ENCODE measurements at regions of chr17 and their contacts with region 1.

Region 1: DNA sequence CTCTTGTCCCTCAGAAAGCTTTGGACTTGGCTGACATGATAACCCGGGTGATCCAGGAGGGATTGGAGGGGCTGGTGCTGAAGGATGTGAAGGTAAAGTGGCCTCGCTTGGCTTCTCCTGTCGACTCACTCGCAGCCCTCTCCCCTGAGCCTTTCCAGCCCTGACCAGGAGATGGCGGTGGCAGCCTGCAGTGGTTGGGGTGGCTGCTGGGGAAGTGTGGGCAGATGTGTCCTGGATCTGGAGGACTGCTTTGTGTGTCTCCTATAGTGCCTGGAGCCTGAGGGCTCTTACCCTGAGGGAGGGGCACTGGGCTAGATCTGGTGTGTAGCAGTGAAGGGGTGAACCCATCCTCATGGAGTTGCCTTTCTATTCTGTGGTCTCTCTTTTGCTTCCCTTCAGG is 17.9 kb downstream of the LIG3 start:
- DNase-seq: peak; percentile 78 to 95
- ATAC-seq: peak; percentile 90
- H3K4me3 ChIP-seq: no peak overlapping the region
- H3K27ac ChIP-seq: peak overlapping the region; percentile 25 to 55; a peak in 4 of 6 replicates
- H3K4me1 ChIP-seq: peaks cover 3% of the 10 kb centered on the region; the same call in 1 of the 3 replicates
- CTCF ChIP-seq: peak; percentile 92
- EP300 ChIP-seq: no peak
- POLR2A ChIP-seq: no peak
- RAD21 ChIP-seq: peak; percentile 97 to 99

Region 2: GRCh38 chr17:34584805-34585416 is 413.3 kb before region 1 on chr17:
- CTCF ChIA-PET with region 1: no interaction called
- POLR2A ChIA-PET with region 1: no interaction called
- DNase-seq: peak; percentile 28 to 49
- ATAC-seq: peak; percentile 25 to 55; a peak in 3 of 6 replicates
- H3K4me3 ChIP-seq: no peak overlapping the region
- H3K27ac ChIP-seq: no peak overlapping the region
- H3K4me1 ChIP-seq: peaks cover 14% of the 10 kb centered on the region
- CTCF ChIP-seq: peak; percentile 27; the same call in 1 of the 3 replicates
- EP300 ChIP-seq: no peak
- POLR2A ChIP-seq: no peak
- RAD21 ChIP-seq: peak; percentile 16 to 49; a peak in 3 of 5 replicates

Region 3: DNA sequence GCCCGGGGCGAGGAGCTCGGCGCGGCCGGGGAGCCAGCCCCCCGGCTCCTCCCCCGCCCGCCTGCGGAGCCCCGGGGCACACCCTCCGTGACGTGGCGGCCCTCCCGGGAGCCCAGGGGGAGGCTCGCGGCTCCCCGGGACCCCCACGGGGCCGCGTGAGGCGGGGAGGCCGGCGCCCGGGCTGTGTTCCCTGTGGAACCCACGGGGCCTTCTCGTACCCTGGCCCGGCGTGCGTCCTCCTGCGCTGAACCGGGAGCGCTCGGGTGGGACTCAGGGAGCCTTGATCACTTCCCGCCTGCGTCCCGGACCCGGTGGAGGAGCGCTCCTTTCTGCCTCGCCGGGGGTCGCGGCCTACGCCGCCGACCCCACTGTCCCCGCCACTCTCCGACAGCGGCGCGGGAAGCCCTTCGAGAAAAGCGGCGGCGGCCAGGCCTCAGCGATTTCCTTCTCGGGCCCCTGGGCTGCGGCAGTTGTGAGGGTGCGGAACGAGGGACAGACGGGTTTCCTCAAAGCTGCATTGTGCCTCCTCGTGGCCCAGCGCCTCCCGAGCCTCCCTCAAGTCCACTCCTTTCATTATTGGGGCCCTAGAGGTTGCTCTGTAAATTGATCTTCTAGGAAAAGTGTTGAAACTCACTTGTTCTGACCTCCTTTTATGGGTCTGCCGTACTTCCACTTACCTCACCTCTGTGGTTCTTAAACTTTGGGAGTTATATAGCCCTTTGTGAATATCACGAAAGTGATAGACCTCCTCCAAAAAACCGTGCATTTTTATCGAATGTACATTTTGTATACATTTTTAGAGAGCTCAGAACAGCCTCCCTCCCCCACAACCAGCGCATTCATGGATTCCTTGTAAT is 17.3 kb before region 1 on chr17:
- CTCF ChIA-PET with region 1: interaction called, 51 read pairs
- POLR2A ChIA-PET with region 1: interaction called, 4 read pairs
- DNase-seq: peak; percentile 86 to 93
- ATAC-seq: peak; percentile 91 to 94
- H3K4me3 ChIP-seq: peak overlapping the region; percentile 78
- H3K27ac ChIP-seq: peak overlapping the region; percentile 94 to 97
- H3K4me1 ChIP-seq: peaks cover 14% of the 10 kb centered on the region
- CTCF ChIP-seq: peak; percentile 55
- EP300 ChIP-seq: peak in 1 of 2 experiments; percentile 18; a peak in 1 of 5 replicates
- POLR2A ChIP-seq: peak; percentile 37
- RAD21 ChIP-seq: peak; percentile 52 to 56; a peak in 4 of 5 replicates

Region 4: DNA sequence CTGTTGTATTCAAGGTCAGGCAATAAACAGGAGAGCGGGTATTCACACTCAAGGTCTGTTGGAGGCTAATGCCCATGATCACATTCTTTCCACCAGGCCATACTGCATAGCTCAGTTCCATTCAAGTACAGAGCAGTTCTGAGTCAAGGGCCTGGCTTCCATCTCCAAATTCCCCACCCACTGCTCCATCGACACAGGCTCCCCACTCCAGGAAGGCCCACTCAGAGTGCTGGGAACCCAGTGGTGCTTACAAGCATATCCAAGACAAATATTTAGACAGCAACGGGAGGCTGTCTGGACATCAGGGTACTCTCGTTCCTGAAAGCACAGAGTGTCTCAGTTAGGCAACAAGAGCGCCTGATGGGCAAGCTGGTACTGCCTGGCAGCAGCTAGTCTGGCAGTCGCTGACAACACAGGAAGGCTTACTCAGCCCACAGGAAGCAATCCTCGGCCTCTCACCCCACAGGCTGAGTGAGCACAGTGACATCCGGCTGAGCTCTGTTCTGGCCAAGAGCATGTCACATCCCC is 24.4 kb after region 1 on chr17:
- CTCF ChIA-PET with region 1: interaction called, 53 read pairs
- POLR2A ChIA-PET with region 1: no interaction called
- DNase-seq: peak; percentile 74 to 82
- ATAC-seq: peak; percentile 92 to 94
- H3K4me3 ChIP-seq: no peak overlapping the region
- H3K27ac ChIP-seq: peak overlapping the region; percentile 77 to 80; a peak in 5 of 6 replicates
- H3K4me1 ChIP-seq: peaks cover 31% of the 10 kb centered on the region
- CTCF ChIP-seq: no peak
- EP300 ChIP-seq: no peak
- POLR2A ChIP-seq: no peak
- RAD21 ChIP-seq: no peak

Region 5: DNA sequence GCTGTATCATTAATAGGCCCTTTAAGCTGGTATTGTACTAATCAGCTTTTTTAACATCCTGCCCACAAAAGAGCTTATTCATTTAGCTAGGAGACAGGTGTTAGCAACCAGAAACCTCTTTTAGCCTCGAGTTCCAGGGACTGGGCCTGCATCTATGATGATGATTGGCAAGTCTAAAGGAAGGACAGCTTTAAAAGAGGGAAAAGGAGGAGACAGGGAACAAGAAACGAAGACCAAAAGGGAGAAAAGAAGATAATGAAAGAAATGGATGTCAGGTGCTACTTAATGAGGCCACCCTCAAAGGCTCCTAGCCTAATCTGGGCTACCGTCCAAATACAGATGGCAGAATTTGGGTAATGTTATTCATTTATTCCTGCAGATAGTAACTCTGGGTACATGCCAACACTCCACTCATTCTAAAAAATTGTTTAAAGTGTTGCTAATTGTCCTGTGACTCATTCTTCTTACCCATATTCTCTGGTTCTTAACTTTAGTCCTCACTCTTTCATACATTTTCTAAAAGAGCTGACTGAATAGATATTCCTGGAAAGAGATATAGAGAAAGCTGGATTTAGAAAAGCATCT is 84.0 kb after region 1 on chr17:
- CTCF ChIA-PET with region 1: interaction called, 12 read pairs
- POLR2A ChIA-PET with region 1: no interaction called
- DNase-seq: no peak
- ATAC-seq: no peak
- H3K4me3 ChIP-seq: no peak overlapping the region; the same call in 2 of the 3 replicates
- H3K27ac ChIP-seq: peak overlapping the region; percentile 88 to 96
- H3K4me1 ChIP-seq: peaks cover 100% of the 10 kb centered on the region
- CTCF ChIP-seq: no peak
- EP300 ChIP-seq: no peak
- POLR2A ChIP-seq: no peak
- RAD21 ChIP-seq: no peak

Region 6: DNA sequence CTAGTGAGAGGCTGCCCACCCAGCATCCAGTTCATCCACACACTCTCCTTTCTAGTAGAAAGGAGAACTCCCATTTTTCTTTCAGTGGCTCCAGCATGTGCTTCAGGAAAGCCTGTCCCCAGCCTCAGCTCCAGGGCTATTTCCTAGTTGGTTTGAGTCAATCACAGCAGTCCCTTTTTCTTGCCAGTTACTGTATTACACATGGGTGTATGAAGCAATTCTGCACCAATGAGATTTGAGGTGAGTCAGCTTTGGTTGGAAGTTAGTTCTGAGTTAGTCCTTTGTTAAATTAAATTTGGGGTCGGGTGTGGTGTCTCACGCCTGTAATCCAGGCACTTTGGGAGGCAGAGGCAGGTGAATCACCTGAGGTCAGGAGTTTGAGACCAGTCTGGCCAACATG is 96.7 kb after region 1 on chr17:
- CTCF ChIA-PET with region 1: interaction called, 46 read pairs
- POLR2A ChIA-PET with region 1: no interaction called
- DNase-seq: peak in 1 of 2 experiments; percentile 72
- ATAC-seq: peak; percentile 79 to 83
- H3K4me3 ChIP-seq: no peak overlapping the region
- H3K27ac ChIP-seq: peak overlapping the region; percentile 29 to 61; a peak in 5 of 6 replicates
- H3K4me1 ChIP-seq: peaks cover 14% of the 10 kb centered on the region
- CTCF ChIP-seq: no peak
- EP300 ChIP-seq: no peak
- POLR2A ChIP-seq: no peak
- RAD21 ChIP-seq: no peak

Region 7: DNA sequence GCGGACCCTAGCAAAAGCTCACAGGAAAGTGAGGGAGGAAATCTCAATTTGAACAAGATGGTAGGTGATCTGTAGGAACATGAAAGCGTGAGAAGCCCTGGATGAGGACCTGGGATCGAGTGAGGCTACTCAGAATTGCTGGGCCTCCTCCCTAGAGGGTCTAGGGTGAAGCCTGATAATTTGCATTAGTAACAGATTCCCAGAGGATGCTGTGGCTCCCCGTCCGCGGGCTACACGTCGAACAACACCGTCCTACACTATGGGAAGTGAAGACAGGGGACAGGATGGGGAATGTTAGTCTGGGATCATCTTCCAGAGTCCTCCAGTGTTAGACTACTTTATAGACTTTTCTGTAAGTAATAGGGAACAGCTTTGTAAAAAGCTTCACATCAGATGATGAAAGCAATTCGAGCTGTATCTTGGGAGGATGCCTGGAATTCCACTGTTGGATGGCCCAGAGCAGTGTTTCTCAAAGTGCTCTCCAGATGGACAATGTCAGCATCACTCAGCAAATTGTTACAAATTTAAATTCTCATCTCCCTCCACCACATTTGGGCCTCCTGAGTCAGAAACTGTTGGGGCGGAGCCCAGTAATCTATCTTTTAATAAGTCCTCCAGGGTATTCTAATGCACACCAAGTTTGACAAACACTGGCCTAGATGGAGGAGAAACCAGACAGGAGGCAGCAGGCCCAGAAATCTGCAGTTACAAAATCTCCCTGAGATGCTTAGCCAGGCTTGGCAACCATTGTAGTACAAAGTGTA is 129.7 kb after region 1 on chr17:
- CTCF ChIA-PET with region 1: interaction called, 297 read pairs
- POLR2A ChIA-PET with region 1: no interaction called
- DNase-seq: no peak
- ATAC-seq: no peak; a peak in 2 of 6 replicates
- H3K4me3 ChIP-seq: no peak overlapping the region
- H3K27ac ChIP-seq: no peak overlapping the region
- H3K4me1 ChIP-seq: no peaks in the 10 kb centered on the region
- CTCF ChIP-seq: no peak
- EP300 ChIP-seq: no peak
- POLR2A ChIP-seq: no peak
- RAD21 ChIP-seq: no peak